Thyroid gland (tissue), 4 donors: ENCODE measurements at regions of chr10 and their contacts with region 1.

Region 1: DNA sequence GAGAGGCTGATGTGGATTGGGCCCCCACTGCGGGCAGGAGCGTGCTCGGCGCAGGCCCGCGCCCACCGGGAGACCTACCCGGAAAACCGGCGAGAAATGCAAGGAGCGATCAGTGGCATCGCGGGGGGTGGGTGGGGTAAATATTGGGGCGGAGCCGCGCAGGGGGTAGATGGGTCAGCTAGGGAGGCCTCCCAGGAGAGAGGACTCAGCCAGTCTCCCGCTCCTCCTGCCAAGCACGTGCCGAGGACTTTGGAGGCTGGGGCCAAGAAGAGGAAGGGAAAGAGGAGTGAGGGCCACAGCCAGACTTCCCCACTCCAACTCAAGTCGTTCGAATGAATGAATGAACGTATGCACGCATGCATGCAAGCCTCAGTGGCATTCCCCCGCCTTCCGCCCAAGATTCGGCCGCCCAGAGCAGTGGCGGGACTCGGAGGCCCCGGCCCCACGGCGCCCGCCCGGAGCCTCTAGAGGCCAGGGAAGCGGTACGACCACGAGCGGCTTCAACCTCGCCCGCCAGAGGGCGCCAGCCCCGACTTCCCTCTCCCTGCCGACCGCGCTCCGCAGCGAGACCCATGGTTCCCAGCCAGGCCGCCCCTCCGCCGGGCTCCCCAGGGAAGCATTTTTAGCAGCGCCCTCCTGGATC is 3.6 kb downstream of the NPM3 start:
- DNase-seq: peak; percentile 72 to 79
- H3K4me3 ChIP-seq: peak overlapping the region in 2 of 3 donors; percentile 10 to 25
- H3K27ac ChIP-seq: no peak overlapping the region
- H3K4me1 ChIP-seq: peaks cover 27 to 48% of the 10 kb centered on the region in 2 donors
- H3K27me3 ChIP-seq: peaks cover 21% of the 10 kb centered on the region
- CTCF ChIP-seq: peak; percentile 47 to 85 (median 60)
- POLR2A ChIP-seq: no peak

Region 2: GRCh38 chr10:101609481-101609880 is 170.2 kb before region 1 on chr10:
- intact Hi-C with region 1: loop called (anchors 5 kb)
- DNase-seq: no peak
- H3K4me3 ChIP-seq: no peak overlapping the region
- H3K27ac ChIP-seq: no peak overlapping the region
- H3K4me1 ChIP-seq: peaks cover 2 to 4% of the 10 kb centered on the region in 2 donors
- H3K27me3 ChIP-seq: no peaks in the 10 kb centered on the region
- CTCF ChIP-seq: no peak
- POLR2A ChIP-seq: no peak